ENCODE measurements at regions of chr20 and their contacts with region 1.

Region 1: GRCh38 chr20:47066484-47067186 is 172.0 kb downstream of the EYA2 start:
- DNase-seq: no peak
- ATAC-seq: no peak
- H3K4me3 ChIP-seq: no peak overlapping the region
- H3K27ac ChIP-seq: no peak overlapping the region
- H3K4me1 ChIP-seq: no peaks in the 10 kb centered on the region
- H3K27me3 ChIP-seq: no peaks in the 10 kb centered on the region
- CTCF ChIP-seq: no peak

Region 2: DNA sequence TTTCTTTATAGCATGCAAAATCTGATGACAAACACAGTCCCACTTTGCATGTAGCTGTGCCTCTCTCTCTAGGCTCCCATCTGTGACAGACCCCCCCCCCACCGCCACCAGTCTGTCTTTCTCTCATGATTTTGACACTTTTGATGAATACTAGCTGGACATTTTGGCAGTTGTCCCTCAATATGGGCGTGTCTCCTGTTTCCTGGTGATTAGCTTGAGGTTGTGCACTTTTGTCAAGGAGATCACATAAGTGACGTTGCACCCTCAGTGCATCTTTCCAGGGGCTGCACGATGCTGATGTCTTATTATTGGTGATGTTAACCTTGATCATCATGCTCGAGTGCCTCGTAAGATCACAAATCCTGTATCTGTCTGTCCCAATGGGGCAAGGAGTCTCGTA is 16.9 kb before region 1 on chr20:
- intact Hi-C with region 1: loop called in 1 of 2 experiments (anchors 1 kb)
- DNase-seq: no peak
- ATAC-seq: no peak
- H3K4me3 ChIP-seq: no peak overlapping the region
- H3K27ac ChIP-seq: no peak overlapping the region
- H3K4me1 ChIP-seq: no peaks in the 10 kb centered on the region
- H3K27me3 ChIP-seq: no peaks in the 10 kb centered on the region
- CTCF ChIP-seq: no peak

Region 3: GRCh38 chr20:47150403-47151152 is 83.9 kb after region 1 on chr20:
- intact Hi-C with region 1: no loop called
- DNase-seq: peak; percentile 53 to 61
- ATAC-seq: peak in 3 of 4 donors; percentile 69 to 77 (median 70)
- H3K4me3 ChIP-seq: no peak overlapping the region
- H3K27ac ChIP-seq: no peak overlapping the region
- H3K4me1 ChIP-seq: no peaks in the 10 kb centered on the region
- H3K27me3 ChIP-seq: no peaks in the 10 kb centered on the region
- CTCF ChIP-seq: peak; percentile 27